PC-9 (cell line): ENCODE measurements at regions of chr6 and their contacts with region 1.

Region 1: GRCh38 chr6:56495654-56496053 is 147.0 kb downstream of the DST start:
- DNase-seq: no peak
- H3K4me3 ChIP-seq: no peak overlapping the region
- H3K27ac ChIP-seq: no peak overlapping the region
- H3K4me1 ChIP-seq: no peaks in the 10 kb centered on the region
- H3K27me3 ChIP-seq: no peaks in the 10 kb centered on the region
- CTCF ChIP-seq: no peak

Region 2: DNA sequence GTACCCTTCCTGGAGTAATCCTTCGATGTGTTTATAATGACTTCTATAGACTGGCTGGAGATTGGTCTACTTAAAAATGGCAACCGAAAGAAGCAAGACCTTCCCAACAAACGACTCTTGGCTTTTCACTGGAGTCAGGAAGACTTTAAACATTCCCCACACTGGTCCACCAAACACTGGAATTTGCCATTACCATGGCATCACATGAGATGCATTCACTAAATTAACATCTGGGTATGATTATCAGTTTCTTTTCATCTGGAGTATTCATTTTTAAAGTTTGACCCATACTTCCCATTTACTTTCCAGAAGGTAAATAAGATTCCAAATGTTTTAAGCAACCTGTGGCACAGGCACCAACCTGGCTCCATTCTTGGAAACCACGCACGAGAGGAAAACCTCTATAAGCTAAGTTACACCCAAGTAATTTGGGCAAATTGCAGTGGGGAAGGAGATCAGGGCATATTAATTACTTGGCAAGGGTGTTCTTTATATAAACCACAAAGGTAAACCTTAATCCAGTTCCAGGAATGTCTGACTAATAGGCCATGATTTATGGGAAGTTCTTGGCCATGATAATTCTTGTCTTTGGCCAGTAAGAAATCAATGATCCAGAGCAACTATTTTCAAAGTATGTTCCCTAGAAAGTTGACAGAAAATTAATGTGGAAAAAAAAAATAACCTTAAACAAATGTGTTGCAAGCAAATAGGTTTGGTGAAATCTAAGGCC is 58.3 kb before region 1 on chr6:
- CTCF ChIA-PET with region 1: no interaction called
- POLR2A ChIA-PET with region 1: no interaction called
- intact Hi-C with region 1: no loop called
- DNase-seq: no peak
- H3K4me3 ChIP-seq: no peak overlapping the region
- H3K27ac ChIP-seq: no peak overlapping the region
- H3K4me1 ChIP-seq: no peaks in the 10 kb centered on the region
- H3K27me3 ChIP-seq: no peaks in the 10 kb centered on the region
- CTCF ChIP-seq: no peak

Region 3: GRCh38 chr6:56510984-56511531 is 15.4 kb after region 1 on chr6:
- CTCF ChIA-PET with region 1: no interaction called
- POLR2A ChIA-PET with region 1: no interaction called
- intact Hi-C with region 1: no loop called
- DNase-seq: no peak
- H3K4me3 ChIP-seq: no peak overlapping the region
- H3K27ac ChIP-seq: no peak overlapping the region
- H3K4me1 ChIP-seq: no peaks in the 10 kb centered on the region
- H3K27me3 ChIP-seq: no peaks in the 10 kb centered on the region
- CTCF ChIP-seq: no peak

Region 4: GRCh38 chr6:56525974-56526789 is 30.5 kb after region 1 on chr6:
- CTCF ChIA-PET with region 1: interaction called, 10 read pairs
- POLR2A ChIA-PET with region 1: no interaction called
- intact Hi-C with region 1: no loop called
- DNase-seq: no peak
- H3K4me3 ChIP-seq: no peak overlapping the region
- H3K27ac ChIP-seq: no peak overlapping the region
- H3K4me1 ChIP-seq: no peaks in the 10 kb centered on the region
- H3K27me3 ChIP-seq: no peaks in the 10 kb centered on the region
- CTCF ChIP-seq: no peak